ENCODE measurements at regions of chr10 and their contacts with region 1.

Region 1: GRCh38 chr10:77416311-77417135 is 221.1 kb downstream of the KCNMA1 start:
- DNase-seq: peak; percentile 100
- ATAC-seq: peak; percentile 94
- H3K4me3 ChIP-seq: peak overlapping the region; percentile 3; the same call in 1 of the 2 replicates
- H3K27ac ChIP-seq: peak overlapping the region; percentile 76
- H3K4me1 ChIP-seq: peaks cover 37% of the 10 kb centered on the region
- H3K27me3 ChIP-seq: no peaks in the 10 kb centered on the region
- CTCF ChIP-seq: no peak

Region 2: GRCh38 chr10:77428691-77429395 is 12.3 kb after region 1 on chr10:
- CTCF ChIA-PET with region 1: no interaction called
- POLR2A ChIA-PET with region 1: no interaction called
- intact Hi-C with region 1: loop called (anchors 1 kb)
- DNase-seq: peak; percentile 92
- ATAC-seq: peak; percentile 68
- H3K4me3 ChIP-seq: no peak overlapping the region
- H3K27ac ChIP-seq: no peak overlapping the region
- H3K4me1 ChIP-seq: peaks cover 10% of the 10 kb centered on the region
- H3K27me3 ChIP-seq: no peaks in the 10 kb centered on the region
- CTCF ChIP-seq: peak; percentile 98

Region 3: DNA sequence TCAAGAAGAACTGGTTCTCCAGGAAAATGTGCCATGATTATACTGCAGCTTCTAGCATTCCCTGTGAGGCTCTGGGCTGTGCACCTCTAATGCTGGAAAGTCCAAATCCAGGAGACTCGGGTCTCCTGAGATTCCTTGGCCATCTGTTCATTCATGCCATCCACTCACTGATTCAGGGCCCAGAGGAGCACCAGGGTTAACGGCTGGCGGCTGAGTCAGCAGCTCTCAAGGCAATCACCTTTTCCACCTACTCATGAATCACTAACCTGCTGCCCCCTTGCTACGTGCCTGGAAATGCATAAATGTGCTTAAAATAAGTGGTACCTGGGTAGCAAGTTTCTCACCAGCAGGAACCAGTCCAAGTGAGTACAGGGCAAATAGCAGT is 88.3 kb after region 1 on chr10:
- CTCF ChIA-PET with region 1: interaction called, 3 read pairs
- POLR2A ChIA-PET with region 1: no interaction called
- intact Hi-C with region 1: loop called (anchors 2 kb)
- DNase-seq: peak; percentile 100
- ATAC-seq: peak; percentile 48
- H3K4me3 ChIP-seq: peak overlapping the region; percentile 15; the same call in 1 of the 2 replicates
- H3K27ac ChIP-seq: peak overlapping the region; percentile 82
- H3K4me1 ChIP-seq: peaks cover 80% of the 10 kb centered on the region
- H3K27me3 ChIP-seq: no peaks in the 10 kb centered on the region
- CTCF ChIP-seq: peak; percentile 90

Region 4: GRCh38 chr10:77513781-77514331 is 97.3 kb after region 1 on chr10:
- CTCF ChIA-PET with region 1: no interaction called
- POLR2A ChIA-PET with region 1: no interaction called
- intact Hi-C with region 1: loop called (anchors 2 kb)
- DNase-seq: peak; percentile 100
- ATAC-seq: peak; percentile 91
- H3K4me3 ChIP-seq: peak overlapping the region; percentile 49
- H3K27ac ChIP-seq: peak overlapping the region; percentile 82
- H3K4me1 ChIP-seq: peaks cover 69% of the 10 kb centered on the region
- H3K27me3 ChIP-seq: no peaks in the 10 kb centered on the region
- CTCF ChIP-seq: no peak

Measured in PC-3 (cell line).